AG04450 (cell line): ENCODE measurements at regions of chr3 and their contacts with region 1.

Region 1: DNA sequence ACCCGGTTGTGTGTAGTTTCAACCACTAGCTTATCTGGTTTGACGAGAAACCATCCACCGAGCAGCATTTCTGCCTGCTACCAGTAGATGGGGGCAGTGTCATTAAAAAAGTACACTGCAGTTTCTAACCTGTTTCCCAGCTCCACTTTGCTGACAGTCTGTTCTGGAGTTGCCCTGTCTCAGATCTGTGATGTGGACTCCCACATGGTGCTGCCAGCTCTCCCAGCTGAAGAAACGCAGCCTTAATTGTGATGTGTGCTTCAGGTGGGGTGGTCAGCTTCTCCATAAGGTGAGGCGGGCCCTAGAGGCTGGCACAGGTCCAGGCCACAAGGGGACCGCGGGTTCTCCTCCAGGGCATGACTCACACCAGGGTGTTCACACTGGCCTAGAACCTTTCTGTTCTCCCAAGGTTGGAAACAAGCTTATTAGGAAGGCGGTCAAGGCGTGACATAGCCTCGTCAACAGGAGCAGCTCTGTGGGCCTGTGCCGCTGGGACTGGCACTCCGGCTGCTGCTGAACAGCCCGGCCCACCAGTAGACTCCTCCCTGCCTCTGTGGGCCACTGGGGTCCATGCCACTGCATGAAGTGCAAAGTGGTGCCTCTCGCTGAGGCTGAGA is 2.9 kb upstream of the FAM43A start:
- DNase-seq: peak; percentile 79
- H3K4me3 ChIP-seq: no peak overlapping the region
- H3K27ac ChIP-seq: peak overlapping the region; percentile 31
- H3K27me3 ChIP-seq: no peaks in the 10 kb centered on the region
- CTCF ChIP-seq: peak; percentile 88

Region 2: DNA sequence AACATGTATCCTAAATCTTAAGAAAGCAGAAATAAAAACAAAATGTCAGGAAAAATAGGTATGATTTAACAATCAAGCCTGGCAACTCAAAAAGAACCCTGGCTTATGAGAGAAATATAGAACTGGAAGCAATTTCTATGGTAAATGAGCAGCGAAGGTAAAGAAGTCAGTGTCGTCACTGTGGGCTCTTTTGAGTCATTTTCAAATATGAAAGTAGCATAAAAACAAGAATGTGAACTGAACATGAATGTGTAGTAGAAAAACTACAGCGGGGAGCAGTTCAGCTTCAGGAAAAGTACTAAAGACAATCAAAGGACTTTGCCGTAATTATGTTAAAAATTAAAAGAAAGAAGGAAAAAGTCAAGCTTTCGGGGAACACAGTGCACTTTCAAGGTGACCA is 28.4 kb before region 1 on chr3:
- CTCF ChIA-PET with region 1: no interaction called
- POLR2A ChIA-PET with region 1: no interaction called
- DNase-seq: no peak
- H3K4me3 ChIP-seq: no peak overlapping the region
- H3K27ac ChIP-seq: no peak overlapping the region
- H3K27me3 ChIP-seq: no peaks in the 10 kb centered on the region
- CTCF ChIP-seq: no peak

Region 3: DNA sequence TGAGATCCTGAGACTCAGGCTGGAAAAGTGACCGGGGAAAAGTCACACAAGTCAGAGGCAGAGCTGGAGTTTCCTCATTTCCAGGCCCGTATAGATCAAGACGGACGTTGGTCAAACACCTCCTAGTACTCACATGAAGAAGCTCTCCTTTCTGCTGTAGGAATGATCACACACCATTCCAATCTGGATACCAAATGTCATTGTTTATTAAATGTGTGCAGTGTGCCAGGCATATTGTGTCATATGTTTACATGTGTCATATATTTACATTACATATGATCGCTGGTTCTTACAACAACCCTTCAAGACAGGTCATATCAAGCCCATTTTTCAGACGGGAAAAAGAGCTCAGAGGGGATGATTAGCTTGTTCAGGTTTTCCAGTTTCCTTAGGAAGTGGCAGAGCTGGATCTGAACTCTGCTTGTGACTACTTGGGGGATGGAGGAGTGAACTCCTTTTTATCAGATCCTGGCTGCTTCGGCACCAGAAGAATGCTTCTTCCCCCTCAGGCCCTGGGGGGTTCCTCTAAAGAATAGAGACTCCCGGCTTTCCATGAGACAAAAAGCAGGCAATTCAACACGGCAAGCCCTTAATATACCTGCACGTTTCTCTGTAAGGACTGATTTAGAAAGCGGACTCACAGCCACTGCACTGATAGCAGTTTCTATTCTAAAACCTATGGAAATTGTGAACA is 44.8 kb after region 1 on chr3:
- CTCF ChIA-PET with region 1: interaction called, 4 read pairs
- POLR2A ChIA-PET with region 1: interaction called, 16 read pairs
- DNase-seq: peak; percentile 63
- H3K4me3 ChIP-seq: no peak overlapping the region
- H3K27ac ChIP-seq: peak overlapping the region; percentile 70
- H3K27me3 ChIP-seq: peaks cover 26% of the 10 kb centered on the region
- CTCF ChIP-seq: no peak

Region 4: DNA sequence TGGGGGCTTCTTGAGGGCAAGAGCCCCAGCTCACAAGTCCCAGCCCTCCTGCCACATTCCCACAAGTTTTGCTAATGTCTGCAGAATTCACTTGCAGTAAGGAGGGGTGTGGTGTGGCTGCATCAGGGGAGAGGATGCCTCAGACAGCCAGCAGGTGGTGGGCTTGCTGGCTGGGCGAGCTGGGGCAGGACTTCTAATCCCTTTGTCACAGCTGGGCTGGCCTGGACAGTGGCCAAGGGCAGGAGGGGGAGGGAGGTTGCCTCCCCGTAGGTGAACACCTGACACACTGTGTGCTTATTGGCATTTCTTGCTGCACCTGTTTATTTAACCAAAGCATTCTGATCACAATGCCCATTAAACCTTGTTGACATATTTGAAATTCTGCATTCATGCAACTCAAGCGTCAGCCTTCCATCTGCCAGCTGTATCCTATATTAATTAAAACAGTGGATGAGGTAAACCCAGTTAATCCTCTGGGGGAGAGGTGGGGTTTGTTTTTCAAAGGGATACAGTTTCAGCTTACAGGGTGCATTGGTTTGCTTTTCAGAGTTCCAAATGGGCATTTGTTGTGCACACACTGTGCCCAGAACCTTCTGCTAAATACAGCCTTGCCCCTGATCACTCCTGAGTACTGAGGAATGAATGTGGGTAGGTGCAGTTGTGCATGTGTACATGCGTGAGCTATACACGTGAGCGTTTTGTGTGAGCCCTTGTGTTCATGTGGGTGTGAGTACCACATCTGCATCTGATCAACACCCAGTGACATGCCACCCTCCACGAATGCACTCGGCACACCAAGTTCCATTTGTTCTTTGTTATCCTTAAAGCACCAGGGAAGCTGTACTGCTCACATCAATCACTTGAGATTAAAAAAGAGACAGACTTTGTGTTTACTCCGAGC is 319.4 kb after region 1 on chr3:
- CTCF ChIA-PET with region 1: interaction called, 11 read pairs
- POLR2A ChIA-PET with region 1: no interaction called
- DNase-seq: no peak
- H3K4me3 ChIP-seq: no peak overlapping the region
- H3K27ac ChIP-seq: no peak overlapping the region
- H3K27me3 ChIP-seq: peaks cover 56% of the 10 kb centered on the region
- CTCF ChIP-seq: peak; percentile 63

Region 5: GRCh38 chr3:195133462-195133861 is 450.7 kb after region 1 on chr3:
- CTCF ChIA-PET with region 1: interaction called, 20 read pairs
- POLR2A ChIA-PET with region 1: no interaction called
- DNase-seq: peak; percentile 87
- H3K4me3 ChIP-seq: no peak overlapping the region
- H3K27ac ChIP-seq: peak overlapping the region; percentile 55
- H3K27me3 ChIP-seq: no peaks in the 10 kb centered on the region
- CTCF ChIP-seq: no peak

Region 6: DNA sequence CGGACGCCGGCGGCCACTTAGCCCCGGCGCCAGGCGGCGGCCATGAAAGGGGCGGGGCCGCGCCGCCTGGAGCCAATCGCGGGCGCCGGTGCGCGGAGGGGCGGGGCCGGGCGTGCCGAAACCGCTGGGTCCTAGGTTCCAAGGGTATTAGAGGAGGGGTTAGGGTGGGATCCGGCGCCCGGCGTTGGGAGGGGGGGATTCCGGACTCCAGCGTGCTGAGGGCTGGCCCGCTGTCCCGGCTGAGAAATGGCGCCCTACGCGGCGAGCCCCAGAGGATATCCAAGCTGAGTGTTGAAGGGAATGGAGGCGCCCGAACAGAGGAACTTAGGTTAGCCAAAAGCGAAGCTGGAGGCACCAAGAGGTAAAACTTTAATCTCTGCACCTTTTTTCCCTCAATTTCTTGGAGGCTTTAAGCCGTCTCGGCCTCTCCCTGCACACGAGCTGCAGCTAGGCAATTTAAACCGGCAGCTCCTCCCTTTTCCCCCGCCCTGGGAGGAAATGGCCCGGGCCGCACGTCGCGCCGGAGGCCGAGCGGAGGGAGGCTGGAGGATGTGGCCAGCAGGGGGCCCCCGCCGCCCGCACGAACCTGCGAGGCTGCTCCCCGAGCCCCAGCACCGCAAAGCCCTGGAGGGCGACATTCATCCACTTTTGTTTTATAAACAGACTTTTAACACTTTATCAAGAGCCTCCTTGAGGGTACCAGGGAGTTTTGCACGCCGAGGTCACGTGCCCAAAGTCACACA is 588.5 kb after region 1 on chr3 and contains the start of gene XXYLT1:
- CTCF ChIA-PET with region 1: interaction called, 59 read pairs
- POLR2A ChIA-PET with region 1: interaction called, 6 read pairs
- DNase-seq: no peak
- H3K4me3 ChIP-seq: peak within 1 kb of the TSS; percentile 81
- H3K27ac ChIP-seq: peak within 1 kb of the TSS; percentile 39
- H3K27me3 ChIP-seq: no peaks in the 10 kb centered on the region
- CTCF ChIP-seq: peak; percentile 86
- polyA plus RNA-seq, gene XXYLT1: 16.5 and 17.3 TPM in 2 replicates